ENCODE measurements at regions of chr3 and their contacts with region 1.

Region 1: DNA sequence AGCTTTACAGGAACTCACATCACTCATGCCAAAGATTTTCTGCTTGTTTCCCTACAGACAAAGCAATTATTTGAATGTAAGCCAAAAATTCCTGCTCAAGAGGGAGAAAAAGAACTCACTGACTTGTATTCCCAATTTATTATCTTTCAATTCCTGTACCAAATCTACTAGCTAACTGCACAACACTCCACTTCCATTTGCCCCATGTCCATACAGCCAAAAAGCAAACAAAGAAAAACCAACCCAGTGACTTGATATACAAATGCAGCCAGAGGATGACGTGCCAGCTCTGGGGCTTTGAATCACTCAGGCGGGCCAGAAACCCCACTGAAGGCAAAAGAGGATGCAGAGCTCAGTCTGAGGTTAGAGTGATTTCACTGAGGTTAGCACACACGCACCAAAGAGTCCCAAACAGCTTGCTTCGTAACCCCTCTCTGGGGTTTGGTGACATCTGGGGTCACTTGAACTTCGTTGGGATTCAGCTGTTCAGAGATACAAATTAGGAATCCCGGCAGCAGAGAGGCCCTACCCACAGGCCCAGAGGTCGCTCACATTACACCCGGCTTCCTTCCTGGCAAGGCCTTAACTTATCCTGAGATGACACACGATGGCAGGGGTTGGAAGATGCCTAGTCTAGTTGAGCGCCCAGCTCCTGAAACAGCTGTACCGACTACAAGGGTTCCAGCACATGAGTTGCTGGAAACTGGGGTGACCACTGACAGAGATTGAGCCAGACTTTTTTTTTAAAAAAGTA is 1.6 kb downstream of the RFTN1 start:
- DNase-seq: peak; percentile 64
- ATAC-seq: peak; percentile 66
- H3K4me3 Mint-ChIP-seq: peak overlapping the region; percentile 97
- H3K27ac Mint-ChIP-seq: peak overlapping the region; percentile 82
- H3K4me1 Mint-ChIP-seq: peaks cover 86% of the 10 kb centered on the region
- H3K27me3 Mint-ChIP-seq: no peaks in the 10 kb centered on the region
- CTCF ChIP-seq: no peak

Region 2: DNA sequence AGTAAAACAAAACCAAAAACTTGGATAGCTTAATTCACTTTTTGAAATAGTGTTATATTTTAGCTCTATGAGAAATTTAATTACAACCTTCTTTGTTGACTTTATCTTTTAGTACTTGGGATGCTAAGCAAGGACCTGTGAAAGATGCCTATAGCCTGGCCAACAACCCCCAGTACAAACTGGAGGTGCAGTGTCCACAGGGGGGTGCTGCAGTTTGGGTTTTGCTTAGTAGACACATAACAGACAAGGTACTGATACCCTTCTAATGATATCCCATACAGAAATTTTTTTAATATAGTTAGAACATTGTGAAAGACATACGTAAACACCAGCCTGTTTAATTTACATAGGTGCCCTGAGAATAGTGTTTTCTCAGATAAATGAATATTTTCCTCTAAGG is 1270.5 kb before region 1 on chr3:
- CTCF ChIA-PET with region 1: no interaction called
- POLR2A ChIA-PET with region 1: no interaction called
- intact Hi-C with region 1: no loop called
- DNase-seq: no peak
- ATAC-seq: peak; percentile 65
- H3K4me3 Mint-ChIP-seq: no peak overlapping the region
- H3K27ac Mint-ChIP-seq: no peak overlapping the region
- H3K4me1 Mint-ChIP-seq: no peaks in the 10 kb centered on the region
- H3K27me3 Mint-ChIP-seq: no peaks in the 10 kb centered on the region
- CTCF ChIP-seq: no peak

Region 3: DNA sequence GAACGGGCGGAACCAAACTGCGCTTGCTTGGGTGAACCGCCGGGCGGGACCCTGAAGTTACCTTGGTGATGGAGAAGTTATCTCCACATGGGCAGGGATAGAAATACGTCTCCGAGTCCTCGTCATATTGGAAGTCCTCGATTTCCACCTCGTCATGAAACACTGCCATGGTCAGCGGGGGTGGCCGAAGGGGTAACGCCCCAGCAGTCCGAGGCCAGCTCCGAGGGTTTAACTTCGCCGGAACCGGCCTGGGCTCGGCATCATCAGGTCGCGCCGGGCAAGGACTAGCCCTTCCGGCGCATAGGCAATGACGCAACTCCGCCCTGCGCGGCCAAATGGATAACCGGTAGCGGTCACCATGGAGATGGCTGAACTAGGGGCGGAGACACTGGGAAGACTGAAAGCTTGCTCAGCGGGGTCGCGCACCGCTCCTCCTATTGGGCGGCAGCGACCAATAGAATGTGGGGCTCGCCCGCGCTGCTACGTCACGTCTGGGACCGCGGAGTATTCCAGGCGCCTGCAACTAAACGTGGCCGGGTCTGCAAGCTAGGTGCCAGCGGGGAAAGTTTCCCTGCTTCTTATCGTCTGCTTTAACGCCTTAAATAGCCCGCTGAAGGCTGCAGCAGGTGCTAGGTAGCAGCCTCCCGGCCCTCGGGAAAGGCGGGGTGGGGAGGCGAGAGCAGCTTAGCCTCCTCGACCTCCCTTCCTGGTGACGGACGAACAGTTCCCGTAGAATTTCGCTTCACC is 247.0 kb before region 1 on chr3 and contains the starts of genes DPH3 and OXNAD1:
- CTCF ChIA-PET with region 1: no interaction called
- POLR2A ChIA-PET with region 1: interaction called, 16 read pairs
- intact Hi-C with region 1: loop called (anchors 1 kb)
- DNase-seq: peak; percentile 99
- ATAC-seq: peak; percentile 96
- H3K4me3 Mint-ChIP-seq: peak within 1 kb of the TSS; percentile 100
- H3K27ac Mint-ChIP-seq: peak within 1 kb of the TSS; percentile 100
- H3K4me1 Mint-ChIP-seq: peaks cover 25% of the 10 kb centered on the region
- H3K27me3 Mint-ChIP-seq: no peaks in the 10 kb centered on the region
- CTCF ChIP-seq: no peak
- total RNA-seq, gene DPH3: 13.4 and 14.7 TPM in 2 replicates
- total RNA-seq, gene OXNAD1: 5.5 and 8.7 TPM in 2 replicates

Region 4: GRCh38 chr3:16378920-16379319 is 132.9 kb before region 1 on chr3:
- CTCF ChIA-PET with region 1: interaction called, 4 read pairs
- POLR2A ChIA-PET with region 1: interaction called, 202 read pairs
- intact Hi-C with region 1: no loop called
- DNase-seq: no peak
- ATAC-seq: peak; percentile 49
- H3K4me3 Mint-ChIP-seq: peak overlapping the region; percentile 51
- H3K27ac Mint-ChIP-seq: peak overlapping the region; percentile 90
- H3K4me1 Mint-ChIP-seq: peaks cover 94% of the 10 kb centered on the region
- H3K27me3 Mint-ChIP-seq: no peaks in the 10 kb centered on the region
- CTCF ChIP-seq: no peak

Region 5: GRCh38 chr3:16467393-16467792 is 44.5 kb before region 1 on chr3:
- CTCF ChIA-PET with region 1: no interaction called
- POLR2A ChIA-PET with region 1: interaction called, 18 read pairs
- intact Hi-C with region 1: loop called (anchors 1 kb)
- DNase-seq: peak; percentile 51
- ATAC-seq: peak; percentile 99
- H3K4me3 Mint-ChIP-seq: peak overlapping the region; percentile 52
- H3K27ac Mint-ChIP-seq: peak overlapping the region; percentile 55
- H3K4me1 Mint-ChIP-seq: peaks cover 69% of the 10 kb centered on the region
- H3K27me3 Mint-ChIP-seq: no peaks in the 10 kb centered on the region
- CTCF ChIP-seq: no peak

Region 6: GRCh38 chr3:16529264-16529663 is 17.4 kb after region 1 on chr3:
- CTCF ChIA-PET with region 1: interaction called, 9 read pairs
- POLR2A ChIA-PET with region 1: interaction called, 137 read pairs
- intact Hi-C with region 1: loop called (anchors 1 kb)
- DNase-seq: no peak
- ATAC-seq: peak; percentile 54
- H3K4me3 Mint-ChIP-seq: no peak overlapping the region
- H3K27ac Mint-ChIP-seq: no peak overlapping the region
- H3K4me1 Mint-ChIP-seq: peaks cover 14% of the 10 kb centered on the region
- H3K27me3 Mint-ChIP-seq: no peaks in the 10 kb centered on the region
- CTCF ChIP-seq: no peak

Region 7: GRCh38 chr3:16884084-16884747 is 372.4 kb after region 1 on chr3:
- CTCF ChIA-PET with region 1: no interaction called
- POLR2A ChIA-PET with region 1: interaction called, 4 read pairs
- intact Hi-C with region 1: loop called (anchors 2 kb)
- DNase-seq: peak; percentile 76
- ATAC-seq: peak; percentile 62
- H3K4me3 Mint-ChIP-seq: peak overlapping the region; percentile 94
- H3K27ac Mint-ChIP-seq: peak overlapping the region; percentile 96
- H3K4me1 Mint-ChIP-seq: peaks cover 43% of the 10 kb centered on the region
- H3K27me3 Mint-ChIP-seq: no peaks in the 10 kb centered on the region
- CTCF ChIP-seq: no peak